H1 (cell line): ENCODE measurements at regions of chr16 and their contacts with region 1.

Region 1: GRCh38 chr16:67561824-67562525 is 351 bp upstream of the CTCF start:
- DNase-seq: peak; percentile 72 to 93
- H3K4me3 ChIP-seq: peak overlapping the region; percentile 76 to 88 (median 82)
- H3K27ac ChIP-seq: peak overlapping the region; percentile 96
- H3K4me1 ChIP-seq: peaks cover 0 to 7% (median 1%) of the 10 kb centered on the region in 4 experiments; a peak in 4 of 7 replicates
- H3K27me3 ChIP-seq: no peaks in the 10 kb centered on the region
- CTCF ChIP-seq: no peak
- EP300 ChIP-seq: peak in 1 of 2 experiments; percentile 9; a peak in 1 of 3 replicates
- POLR2A ChIP-seq: peak; percentile 49 to 79
- RAD21 ChIP-seq: no peak

Region 2: GRCh38 chr16:67447508-67448076 is 114.4 kb before region 1 on chr16:
- CTCF ChIA-PET with region 1: no interaction called
- POLR2A ChIA-PET with region 1: no interaction called
- DNase-seq: peak in 1 of 2 experiments; percentile 77
- H3K4me3 ChIP-seq: no peak overlapping the region
- H3K27ac ChIP-seq: no peak overlapping the region
- H3K4me1 ChIP-seq: peaks cover 0 to 8% (median 4%) of the 10 kb centered on the region in 4 experiments; a peak in 5 of 7 replicates
- H3K27me3 ChIP-seq: no peaks in the 10 kb centered on the region
- CTCF ChIP-seq: peak; percentile 57 to 63 (median 59)
- EP300 ChIP-seq: no peak
- POLR2A ChIP-seq: no peak
- RAD21 ChIP-seq: peak; percentile 40 to 66; a peak in 3 of 4 replicates

Region 3: DNA sequence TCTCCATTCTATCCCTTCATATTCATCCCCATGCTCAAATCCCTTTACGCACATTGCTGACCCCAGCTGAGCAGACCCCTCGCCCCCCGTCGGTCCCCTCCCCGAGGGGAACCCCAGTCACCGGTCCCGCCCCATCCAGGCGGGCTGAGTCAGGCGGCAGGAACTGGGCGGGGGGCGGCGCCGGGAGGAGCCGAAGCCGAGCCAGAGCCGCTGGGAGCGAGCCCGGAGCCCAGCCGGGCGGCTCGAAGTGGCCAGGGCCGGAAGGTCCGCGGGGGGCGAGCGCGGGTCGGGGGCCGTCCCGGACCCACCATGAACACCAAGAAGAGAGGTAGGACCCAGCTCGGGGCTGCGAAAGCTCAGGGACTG is 24.7 kb before region 1 on chr16:
- CTCF ChIA-PET with region 1: interaction called, 5 read pairs
- POLR2A ChIA-PET with region 1: interaction called, 27 read pairs
- DNase-seq: peak in 1 of 2 experiments; percentile 71
- H3K4me3 ChIP-seq: peak overlapping the region; percentile 40 to 73 (median 49)
- H3K27ac ChIP-seq: no peak overlapping the region
- H3K4me1 ChIP-seq: peaks cover 0 to 11% (median 6%) of the 10 kb centered on the region in 4 experiments; a peak in 5 of 7 replicates
- H3K27me3 ChIP-seq: peaks cover 47 to 93% (median 88%) of the 10 kb centered on the region in 4 experiments
- CTCF ChIP-seq: no peak
- EP300 ChIP-seq: no peak
- POLR2A ChIP-seq: no peak
- RAD21 ChIP-seq: no peak

Region 4: DNA sequence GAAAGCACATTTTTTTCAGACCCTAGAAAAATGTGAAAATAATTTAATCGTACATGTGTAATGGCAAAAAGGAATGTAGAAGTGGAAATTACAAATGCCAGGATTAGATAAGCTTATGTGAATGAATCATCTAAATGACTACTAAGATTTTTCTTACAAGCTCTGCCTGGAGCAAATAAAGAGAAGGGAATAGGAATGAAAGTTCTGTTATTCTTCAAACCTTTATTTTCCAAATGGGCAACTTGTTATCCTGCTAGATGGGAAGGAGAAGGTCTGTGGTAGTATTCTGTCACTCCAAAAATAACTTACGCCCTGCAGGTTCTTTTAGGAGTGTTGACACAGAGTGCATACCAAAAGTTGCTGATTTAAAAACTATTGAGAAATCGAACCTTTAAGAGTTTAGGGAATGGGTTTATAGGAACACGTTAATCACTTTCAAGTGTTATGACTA is 10.0 kb after region 1 on chr16:
- CTCF ChIA-PET with region 1: interaction called, 3 read pairs
- POLR2A ChIA-PET with region 1: interaction called, 10 read pairs
- DNase-seq: no peak
- H3K4me3 ChIP-seq: no peak overlapping the region
- H3K27ac ChIP-seq: no peak overlapping the region
- H3K4me1 ChIP-seq: no peaks in the 10 kb centered on the region
- H3K27me3 ChIP-seq: no peaks in the 10 kb centered on the region
- CTCF ChIP-seq: no peak
- EP300 ChIP-seq: no peak
- POLR2A ChIP-seq: no peak
- RAD21 ChIP-seq: no peak

Region 5: DNA sequence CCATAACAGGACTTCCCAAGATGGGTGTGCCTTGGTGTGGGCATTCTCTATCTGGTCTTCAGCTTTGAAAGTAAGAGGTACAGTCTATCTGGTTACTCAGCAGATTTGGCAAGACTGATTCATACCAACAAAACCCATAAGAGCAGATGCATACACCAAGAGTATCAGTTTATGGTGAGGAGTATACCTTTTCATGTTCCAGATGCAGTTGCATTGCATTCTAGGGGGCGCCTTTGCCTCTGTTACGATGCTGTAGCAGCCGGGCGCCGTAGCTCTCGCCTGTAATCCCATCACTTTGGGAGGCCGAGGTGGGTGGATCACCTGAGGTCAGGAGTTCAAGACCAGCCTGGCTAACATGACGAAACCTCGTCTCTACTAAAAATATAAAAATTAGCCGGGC is 51.8 kb after region 1 on chr16:
- CTCF ChIA-PET with region 1: interaction called, 15 read pairs
- POLR2A ChIA-PET with region 1: interaction called, 8 read pairs
- DNase-seq: peak; percentile 15 to 73
- H3K4me3 ChIP-seq: no peak overlapping the region
- H3K27ac ChIP-seq: no peak overlapping the region
- H3K4me1 ChIP-seq: no peaks in the 10 kb centered on the region
- H3K27me3 ChIP-seq: no peaks in the 10 kb centered on the region
- CTCF ChIP-seq: peak; percentile 49 to 73 (median 57)
- EP300 ChIP-seq: no peak
- POLR2A ChIP-seq: no peak
- RAD21 ChIP-seq: peak; percentile 18 to 35; a peak in 3 of 4 replicates

Region 6: DNA sequence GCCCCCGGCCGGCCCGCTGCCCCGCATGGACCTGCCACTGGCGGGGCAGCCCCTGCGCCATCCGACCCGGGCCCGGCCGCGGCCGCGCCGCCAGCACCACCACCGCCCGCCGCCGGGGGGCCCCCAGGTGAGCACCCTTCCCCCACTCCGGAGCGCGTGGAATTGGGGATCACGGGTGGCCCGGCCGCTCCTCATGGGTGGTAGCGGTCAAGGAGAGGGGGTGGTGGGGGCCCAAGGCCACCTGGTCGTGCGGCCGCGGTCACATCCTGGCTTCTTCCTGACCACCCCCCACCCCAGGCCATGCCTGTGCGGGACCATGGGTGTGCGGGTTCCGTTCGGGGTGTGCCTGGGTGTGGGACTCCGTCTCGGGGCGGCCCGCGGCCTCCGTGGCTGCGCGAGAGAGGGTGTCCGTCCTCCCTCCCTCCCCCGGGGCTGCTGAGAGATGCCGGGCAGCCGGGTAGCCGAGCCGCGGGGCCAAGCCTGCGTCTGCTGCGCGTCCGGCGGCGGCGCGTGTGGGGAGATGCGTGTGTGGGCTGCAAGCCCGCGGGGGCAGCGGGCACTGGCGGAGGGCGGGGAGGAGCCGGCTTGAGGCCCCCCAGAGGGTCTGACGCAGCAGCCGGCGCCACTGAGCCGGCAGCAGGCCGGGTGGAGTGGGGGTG is 91.3 kb after region 1 on chr16:
- CTCF ChIA-PET with region 1: interaction called, 4 read pairs
- POLR2A ChIA-PET with region 1: interaction called, 13 read pairs
- DNase-seq: no peak
- H3K4me3 ChIP-seq: peak overlapping the region; percentile 47 to 76 (median 58)
- H3K27ac ChIP-seq: no peak overlapping the region
- H3K4me1 ChIP-seq: peaks cover 0 to 18% (median 5%) of the 10 kb centered on the region in 4 experiments; a peak in 5 of 7 replicates
- H3K27me3 ChIP-seq: peaks cover 0 to 23% (median 17%) of the 10 kb centered on the region in 4 experiments; a peak in 4 of 7 replicates
- CTCF ChIP-seq: peak; percentile 14 to 40 (median 24); a peak in 3 of 4 replicates
- EP300 ChIP-seq: no peak
- POLR2A ChIP-seq: no peak
- RAD21 ChIP-seq: no peak

Region 7: DNA sequence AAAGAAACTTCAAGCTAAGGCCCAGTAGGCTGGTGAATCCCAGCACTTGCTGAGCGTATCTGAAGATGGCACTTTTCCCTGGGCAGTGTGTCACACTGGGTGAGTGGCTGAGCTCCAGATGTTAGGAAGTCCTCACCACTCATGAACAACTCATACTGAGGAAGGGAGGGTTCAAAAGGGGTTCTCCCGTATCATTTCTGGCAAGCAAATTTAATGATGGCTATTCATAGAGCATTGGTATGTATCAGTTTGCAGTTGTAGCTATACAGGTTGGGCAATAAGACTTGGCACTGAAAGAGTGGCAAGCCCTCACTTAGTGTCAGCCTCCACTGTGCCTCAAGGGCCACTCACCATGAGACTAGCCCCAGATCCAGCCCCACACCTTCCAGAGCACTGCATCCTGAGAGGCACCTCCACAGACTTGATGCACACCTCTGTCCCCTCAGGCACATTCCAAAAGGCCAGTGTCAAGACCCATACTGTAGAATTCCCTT is 146.4 kb after region 1 on chr16:
- CTCF ChIA-PET with region 1: no interaction called
- POLR2A ChIA-PET with region 1: no interaction called
- DNase-seq: no peak
- H3K4me3 ChIP-seq: no peak overlapping the region
- H3K27ac ChIP-seq: no peak overlapping the region
- H3K4me1 ChIP-seq: peaks cover 0 to 7% (median 3%) of the 10 kb centered on the region in 4 experiments; a peak in 2 of 7 replicates
- H3K27me3 ChIP-seq: no peaks in the 10 kb centered on the region
- CTCF ChIP-seq: no peak
- EP300 ChIP-seq: no peak
- POLR2A ChIP-seq: no peak
- RAD21 ChIP-seq: no peak